HCT116 (cell line): ENCODE measurements at regions of chr4 and their contacts with region 1.

Region 1: DNA sequence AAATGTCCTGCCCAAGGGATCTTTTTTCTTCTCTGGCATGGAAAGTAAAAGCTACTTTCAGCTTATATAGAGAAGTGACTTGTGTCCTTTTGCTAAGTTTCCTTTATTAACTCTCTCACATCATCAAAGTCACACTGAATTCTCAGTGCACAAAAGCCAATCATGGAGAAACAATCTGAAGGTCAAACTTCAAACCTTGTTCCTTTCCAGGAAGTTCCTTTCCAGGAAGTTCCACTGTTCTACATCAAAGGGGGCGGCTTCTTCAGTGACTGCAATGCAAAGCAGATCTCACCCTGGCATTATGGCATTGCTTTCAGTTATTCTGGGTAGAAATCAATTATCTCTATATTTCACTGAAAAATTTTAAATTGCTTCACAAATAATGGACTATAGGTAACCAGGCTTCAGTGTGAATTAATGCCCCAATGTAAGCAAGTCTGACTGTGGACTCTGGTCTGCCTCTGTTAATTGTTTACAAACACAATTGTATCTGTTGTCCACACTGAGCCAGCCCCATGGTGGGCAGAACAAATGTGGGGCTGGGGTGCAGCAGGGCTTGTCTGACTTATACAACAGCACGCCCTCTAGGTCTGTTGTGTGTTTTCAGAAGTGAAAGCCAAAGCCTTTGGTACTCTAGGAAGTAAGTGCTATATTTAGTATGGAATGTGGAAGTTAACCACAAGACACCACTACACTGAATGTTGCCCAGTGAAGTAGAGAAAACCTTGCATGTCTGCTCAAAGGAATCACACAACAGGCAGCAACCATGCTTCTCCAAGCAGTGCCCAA is 98.8 kb downstream of the CDS1 start:
- DNase-seq: no peak
- ATAC-seq: peak; percentile 91
- H3K4me3 ChIP-seq: peak overlapping the region in 1 of 2 experiments; percentile 20; a peak in 2 of 4 replicates
- H3K27ac ChIP-seq: peak overlapping the region; percentile 28; the same call in 1 of the 2 replicates
- H3K4me1 ChIP-seq: peaks cover 21 to 30% of the 10 kb centered on the region in 2 experiments
- H3K27me3 ChIP-seq: no peaks in the 10 kb centered on the region
- CTCF ChIP-seq: no peak; a peak in 1 of 6 replicates
- POLR2A ChIP-seq: no peak
- RAD21 ChIP-seq: peak; percentile 39

Region 2: GRCh38 chr4:84286048-84286447 is 395.6 kb before region 1 on chr4:
- CTCF ChIA-PET with region 1: no interaction called
- POLR2A ChIA-PET with region 1: no interaction called
- RAD21 ChIA-PET with region 1: no interaction called
- intact Hi-C with region 1: no loop called
- DNase-seq: no peak
- ATAC-seq: no peak
- H3K4me3 ChIP-seq: no peak overlapping the region
- H3K27ac ChIP-seq: no peak overlapping the region
- H3K4me1 ChIP-seq: no peaks in the 10 kb centered on the region
- H3K27me3 ChIP-seq: no peaks in the 10 kb centered on the region
- CTCF ChIP-seq: no peak
- POLR2A ChIP-seq: no peak
- RAD21 ChIP-seq: no peak

Region 3: DNA sequence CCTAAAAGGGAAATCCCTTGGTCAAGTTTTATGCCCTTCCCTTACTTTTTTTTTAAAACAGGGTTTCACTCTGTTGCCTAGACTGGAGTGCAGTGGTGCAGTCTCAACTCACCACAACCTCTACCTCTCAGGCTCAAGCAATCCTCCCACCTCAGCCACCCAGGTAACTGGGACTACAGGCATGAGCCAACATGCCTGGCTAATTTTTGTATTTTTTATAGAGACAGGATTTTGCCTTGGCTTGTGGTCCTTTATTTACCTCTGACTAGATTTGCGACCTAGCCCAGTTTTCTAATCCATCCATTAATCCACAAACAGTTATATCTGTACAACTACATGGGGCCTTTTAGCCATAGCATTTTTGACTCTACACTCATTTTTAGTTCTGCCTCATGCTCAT is 75.0 kb before region 1 on chr4:
- CTCF ChIA-PET with region 1: no interaction called
- POLR2A ChIA-PET with region 1: no interaction called
- RAD21 ChIA-PET with region 1: no interaction called
- intact Hi-C with region 1: loop called (anchors 2 kb)
- DNase-seq: no peak
- ATAC-seq: no peak
- H3K4me3 ChIP-seq: no peak overlapping the region
- H3K27ac ChIP-seq: no peak overlapping the region
- H3K4me1 ChIP-seq: no peaks in the 10 kb centered on the region
- H3K27me3 ChIP-seq: no peaks in the 10 kb centered on the region
- CTCF ChIP-seq: no peak
- POLR2A ChIP-seq: no peak
- RAD21 ChIP-seq: no peak

Region 4: DNA sequence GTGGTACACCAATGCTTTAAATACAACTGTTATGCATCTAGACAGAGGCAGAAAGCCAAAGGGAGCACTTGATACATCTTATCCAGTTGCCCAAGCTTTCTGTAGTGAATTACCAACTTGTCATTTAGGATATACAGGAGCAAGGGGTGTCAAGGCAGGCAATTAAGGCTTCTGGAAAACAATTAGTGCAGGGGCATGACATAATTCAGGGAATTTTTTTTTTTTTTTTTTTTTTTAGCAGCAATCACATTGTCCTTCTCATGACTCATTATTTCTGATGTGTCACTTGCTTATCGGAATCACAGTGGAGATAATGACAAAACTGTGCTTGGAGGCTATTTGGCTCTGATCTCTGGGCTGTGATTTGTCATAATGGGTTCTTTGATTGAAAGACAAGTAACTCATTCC is 1052.7 kb after region 1 on chr4:
- CTCF ChIA-PET with region 1: no interaction called
- POLR2A ChIA-PET with region 1: no interaction called
- RAD21 ChIA-PET with region 1: no interaction called
- intact Hi-C with region 1: no loop called
- DNase-seq: peak; percentile 74
- ATAC-seq: peak; percentile 40; the same call in 1 of the 2 replicates
- H3K4me3 ChIP-seq: no peak overlapping the region
- H3K27ac ChIP-seq: no peak overlapping the region
- H3K4me1 ChIP-seq: peaks cover 0 to 11% of the 10 kb centered on the region in 2 experiments; a peak in 3 of 4 replicates
- H3K27me3 ChIP-seq: no peaks in the 10 kb centered on the region
- CTCF ChIP-seq: no peak
- POLR2A ChIP-seq: no peak
- RAD21 ChIP-seq: no peak